Dorsolateral prefrontal cortex (tissue), 120 donors: ENCODE measurements at regions of chr11 and their contacts with region 1.

Region 1: GRCh38 chr11:19742588-19743292 is 30.1 kb downstream of the NAV2 start:
- DNase-seq: peak; percentile 78 to 94 (median 87)
- H3K4me3 ChIP-seq: no peak overlapping the region
- H3K27ac ChIP-seq: peak overlapping the region in 17 of 59 donors; percentile 16 to 70 (median 30)
- H3K27me3 ChIP-seq: no peaks in the 10 kb centered on the region
- CTCF ChIP-seq: peak; percentile 89 to 99 (median 96)

Region 2: GRCh38 chr11:19614370-19614940 is 128.3 kb before region 1 on chr11:
- intact Hi-C with region 1: loop called in 1 of 2 experiments (anchors 2 kb)
- DNase-seq: no peak
- H3K4me3 ChIP-seq: no peak overlapping the region
- H3K27ac ChIP-seq: no peak overlapping the region
- H3K27me3 ChIP-seq: no peaks in the 10 kb centered on the region
- CTCF ChIP-seq: peak in 34 of 56 donors; percentile 8 to 64 (median 28)

Region 3: DNA sequence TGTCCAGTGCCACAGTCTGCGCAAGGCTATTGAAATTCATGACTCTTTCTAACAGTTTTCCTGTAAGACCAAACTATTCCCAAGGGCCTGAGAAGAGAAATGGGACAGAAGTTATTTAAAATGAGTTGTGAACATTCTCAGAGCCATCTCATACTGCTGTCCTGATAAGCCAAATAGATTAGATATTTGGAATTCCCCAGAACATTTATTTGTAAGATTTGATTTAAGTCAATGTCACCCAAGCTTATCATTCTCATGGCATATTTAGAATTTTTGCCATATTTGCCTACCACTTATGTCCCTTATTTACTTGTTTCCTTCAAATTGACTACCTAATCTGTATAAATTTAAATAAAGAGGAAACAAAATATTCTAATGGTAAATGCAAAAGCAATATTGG is 52.3 kb after region 1 on chr11:
- intact Hi-C with region 1: loop called in 1 of 2 experiments (anchors 5 kb)
- DNase-seq: no peak
- H3K4me3 ChIP-seq: no peak overlapping the region
- H3K27ac ChIP-seq: no peak overlapping the region
- H3K27me3 ChIP-seq: no peaks in the 10 kb centered on the region
- CTCF ChIP-seq: no peak

Region 4: DNA sequence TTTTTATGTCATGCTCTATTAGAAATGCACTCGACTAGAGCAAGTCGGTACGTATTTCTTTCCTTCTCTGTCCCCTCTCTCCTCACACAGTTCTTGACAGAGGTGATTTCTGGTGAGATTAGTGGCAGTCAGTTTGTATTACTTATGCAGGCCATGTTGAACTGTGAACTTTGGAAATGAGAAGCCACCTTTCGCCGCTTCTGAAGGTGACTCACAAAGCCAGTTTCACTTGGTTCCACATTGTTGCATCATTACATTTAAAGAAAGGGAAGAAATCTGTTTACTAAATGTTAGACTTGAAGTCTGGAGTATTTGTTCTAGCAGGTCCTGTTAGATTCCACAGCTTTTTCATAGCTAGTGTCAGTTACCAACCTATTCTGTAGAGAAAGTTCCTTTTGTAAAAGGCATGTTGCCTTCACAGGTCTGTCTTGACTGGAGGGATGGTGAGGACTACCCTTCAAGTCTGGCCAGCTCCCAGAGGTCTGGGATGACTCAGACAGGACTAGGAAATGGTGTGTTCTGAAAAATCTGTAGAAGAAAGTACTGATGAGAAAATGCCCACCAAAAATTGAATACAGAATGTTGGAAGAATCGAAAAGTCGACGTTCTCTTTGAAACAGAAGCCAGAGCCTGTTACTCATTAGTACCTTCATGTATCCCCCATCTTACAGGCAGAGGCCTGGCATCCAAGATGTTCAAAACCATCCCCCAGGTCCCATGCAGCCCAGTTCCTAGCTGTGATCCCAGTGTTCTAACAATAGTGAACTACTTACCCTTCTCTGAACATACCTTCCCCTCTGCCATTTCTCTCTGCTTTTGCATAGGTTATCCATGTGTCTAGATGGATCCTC is 236.2 kb after region 1 on chr11:
- intact Hi-C with region 1: no loop called
- DNase-seq: no peak
- H3K4me3 ChIP-seq: no peak overlapping the region
- H3K27ac ChIP-seq: no peak overlapping the region
- H3K27me3 ChIP-seq: no peaks in the 10 kb centered on the region
- CTCF ChIP-seq: no peak